Gastrocnemius medialis (tissue), 4 donors: ENCODE measurements at regions of chr12 and their contacts with region 1.

Region 1: GRCh38 chr12:40185303-40185693 is 39.5 kb upstream of the LRRK2 start:
- DNase-seq: no peak
- ATAC-seq: no peak
- H3K4me3 ChIP-seq: no peak overlapping the region
- H3K27ac ChIP-seq: no peak overlapping the region
- H3K4me1 ChIP-seq: no peaks in the 10 kb centered on the region
- H3K27me3 ChIP-seq: no peaks in the 10 kb centered on the region
- CTCF ChIP-seq: no peak
- POLR2A ChIP-seq: no peak

Region 2: DNA sequence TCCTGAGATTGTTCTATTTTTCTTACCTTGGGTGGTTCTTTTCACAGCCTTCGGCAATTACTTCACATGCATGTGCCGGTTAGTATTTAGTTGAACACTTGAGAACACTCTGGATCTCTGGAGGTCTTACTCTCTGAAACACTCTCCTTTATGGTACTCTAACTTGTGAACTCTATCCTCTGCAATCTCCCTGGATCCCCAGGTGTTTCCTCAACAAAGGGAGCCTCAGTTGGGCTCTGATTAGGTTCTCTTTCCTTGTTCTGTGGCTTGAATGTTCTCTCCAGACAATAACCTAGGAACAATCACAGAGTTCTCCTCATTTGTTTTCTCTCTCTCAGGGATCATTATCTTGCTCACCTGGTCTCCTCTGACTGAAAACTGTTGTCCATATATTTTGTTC is 525.2 kb before region 1 on chr12:
- in situ Hi-C with region 1: no loop called
- intact Hi-C with region 1: no loop called
- DNase-seq: no peak
- ATAC-seq: no peak
- H3K4me3 ChIP-seq: no peak overlapping the region
- H3K27ac ChIP-seq: no peak overlapping the region
- H3K4me1 ChIP-seq: no peaks in the 10 kb centered on the region
- H3K27me3 ChIP-seq: no peaks in the 10 kb centered on the region
- CTCF ChIP-seq: no peak
- POLR2A ChIP-seq: no peak

Region 3: DNA sequence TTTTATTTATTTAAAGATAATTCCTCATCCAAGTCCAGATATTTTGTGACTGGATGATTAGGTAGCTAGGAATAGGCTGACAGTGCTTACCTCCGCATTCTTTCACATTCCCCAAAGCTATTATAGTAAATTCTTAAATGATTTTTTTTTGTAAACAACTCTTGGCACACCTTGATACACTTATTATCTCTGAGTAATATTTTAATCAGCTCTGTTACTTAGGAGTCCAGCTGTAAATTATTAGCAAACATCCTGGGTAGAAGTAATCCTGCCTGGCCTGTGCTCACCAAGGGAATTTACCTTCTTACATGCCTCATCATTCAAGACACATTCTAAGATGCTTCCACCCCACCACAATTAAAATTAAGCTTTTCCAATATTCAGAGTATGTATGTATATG is 265.5 kb before region 1 on chr12:
- in situ Hi-C with region 1: no loop called
- intact Hi-C with region 1: no loop called
- DNase-seq: no peak
- ATAC-seq: no peak
- H3K4me3 ChIP-seq: no peak overlapping the region
- H3K27ac ChIP-seq: no peak overlapping the region
- H3K4me1 ChIP-seq: no peaks in the 10 kb centered on the region
- H3K27me3 ChIP-seq: no peaks in the 10 kb centered on the region
- CTCF ChIP-seq: no peak
- POLR2A ChIP-seq: no peak

Region 4: DNA sequence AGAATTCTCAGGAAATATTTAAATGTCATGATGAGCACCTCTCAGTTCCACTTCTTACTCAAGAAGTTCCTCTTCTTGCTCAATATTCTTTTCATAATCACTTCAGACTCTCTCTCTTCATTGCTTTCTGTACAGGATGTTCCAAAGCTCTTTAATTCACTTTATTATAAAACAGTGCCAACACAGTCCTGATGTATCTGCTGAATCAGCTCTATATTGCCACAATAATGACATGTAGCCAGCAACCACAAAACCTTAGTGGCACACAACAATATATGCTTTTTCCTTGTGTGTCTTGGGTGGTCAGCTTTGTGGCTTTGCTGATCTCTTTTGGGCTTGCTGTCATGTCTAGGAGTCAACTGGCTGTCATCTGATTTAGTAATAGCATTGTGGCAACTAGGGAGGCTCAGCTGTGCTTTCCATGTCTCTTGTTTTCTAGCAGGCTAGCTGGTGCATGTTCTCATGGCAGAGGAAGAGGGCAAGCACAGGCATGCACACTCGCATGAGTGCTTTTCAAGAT is 26.6 kb before region 1 on chr12:
- in situ Hi-C with region 1: no loop called
- intact Hi-C with region 1: loop called (anchors 1 kb)
- DNase-seq: peak; percentile 16 to 38
- ATAC-seq: peak; percentile 69 to 84
- H3K4me3 ChIP-seq: no peak overlapping the region
- H3K27ac ChIP-seq: peak overlapping the region in 1 of 4 donors; percentile 21
- H3K4me1 ChIP-seq: no peaks in the 10 kb centered on the region
- H3K27me3 ChIP-seq: no peaks in the 10 kb centered on the region
- CTCF ChIP-seq: no peak
- POLR2A ChIP-seq: no peak

Region 5: GRCh38 chr12:41459111-41459905 is 1274.0 kb after region 1 on chr12:
- in situ Hi-C with region 1: no loop called
- intact Hi-C with region 1: no loop called
- DNase-seq: no peak
- ATAC-seq: no peak
- H3K4me3 ChIP-seq: no peak overlapping the region
- H3K27ac ChIP-seq: no peak overlapping the region
- H3K4me1 ChIP-seq: no peaks in the 10 kb centered on the region
- H3K27me3 ChIP-seq: no peaks in the 10 kb centered on the region
- CTCF ChIP-seq: no peak
- POLR2A ChIP-seq: no peak